Caco-2 (cell line): ENCODE measurements at regions of chr10 and their contacts with region 1.

Region 1: DNA sequence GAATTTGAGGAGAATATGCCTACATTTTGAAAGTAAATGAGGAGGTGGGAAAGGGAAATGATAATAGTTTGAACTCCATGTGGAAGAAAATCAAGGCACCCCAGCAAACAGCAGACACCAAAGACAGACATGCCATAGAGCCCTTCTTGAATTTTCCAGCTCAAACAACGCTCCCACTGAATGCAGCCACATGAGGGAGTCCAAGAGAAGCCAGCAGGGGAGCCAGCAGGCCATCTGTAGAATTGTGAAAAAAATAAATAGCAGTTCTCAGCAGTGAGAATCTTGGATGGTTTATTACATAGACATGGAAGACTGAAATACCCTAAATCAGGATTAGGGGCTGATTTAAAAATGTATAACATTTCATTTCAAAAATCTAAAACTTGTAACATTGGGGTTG is 1567.3 kb upstream of the LRRTM3 start:
- DNase-seq: peak; percentile 63 to 66
- H3K4me3 ChIP-seq: no peak overlapping the region
- H3K4me3 Mint-ChIP-seq: no peak overlapping the region
- H3K27ac Mint-ChIP-seq: no peak overlapping the region
- H3K4me1 ChIP-seq: no peaks in the 10 kb centered on the region
- H3K4me1 Mint-ChIP-seq: no peaks in the 10 kb centered on the region
- H3K27me3 ChIP-seq: no peaks in the 10 kb centered on the region
- H3K27me3 Mint-ChIP-seq: no peaks in the 10 kb centered on the region
- CTCF ChIP-seq: peak; percentile 84 to 93

Region 2: DNA sequence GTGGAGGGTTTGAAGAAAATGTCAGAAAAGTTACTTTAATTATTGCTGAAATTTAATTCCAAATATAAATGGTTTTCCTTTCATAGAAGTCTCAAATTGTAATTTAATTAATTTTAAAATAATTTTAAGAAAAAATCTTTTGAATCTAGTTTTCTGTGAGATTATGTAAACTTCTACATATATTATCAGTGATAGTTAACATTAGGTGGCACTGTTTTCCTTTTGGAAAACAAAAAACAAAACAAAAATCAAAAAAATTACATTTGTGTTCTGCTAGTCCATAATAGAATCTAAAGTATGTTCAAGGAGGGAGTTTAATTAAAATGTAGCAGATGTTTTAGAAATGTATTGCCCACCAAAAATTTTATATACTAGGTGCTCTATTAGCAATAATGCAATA is 380.6 kb before region 1 on chr10:
- CTCF ChIA-PET with region 1: no interaction called
- POLR2A ChIA-PET with region 1: no interaction called
- intact Hi-C with region 1: loop called (anchors 10 kb)
- DNase-seq: no peak
- H3K4me3 ChIP-seq: no peak overlapping the region
- H3K4me3 Mint-ChIP-seq: no peak overlapping the region
- H3K27ac Mint-ChIP-seq: no peak overlapping the region
- H3K4me1 ChIP-seq: no peaks in the 10 kb centered on the region
- H3K4me1 Mint-ChIP-seq: no peaks in the 10 kb centered on the region
- H3K27me3 ChIP-seq: no peaks in the 10 kb centered on the region
- H3K27me3 Mint-ChIP-seq: no peaks in the 10 kb centered on the region
- CTCF ChIP-seq: peak in 1 of 2 experiments; percentile 25

Region 3: GRCh38 chr10:65570143-65571010 is 211.8 kb after region 1 on chr10:
- CTCF ChIA-PET with region 1: no interaction called
- POLR2A ChIA-PET with region 1: no interaction called
- intact Hi-C with region 1: loop called (anchors 5 kb)
- DNase-seq: peak; percentile 87 to 90
- H3K4me3 ChIP-seq: peak overlapping the region; percentile 49
- H3K4me3 Mint-ChIP-seq: peak overlapping the region; percentile 95
- H3K27ac Mint-ChIP-seq: peak overlapping the region; percentile 95
- H3K4me1 ChIP-seq: peaks cover 8% of the 10 kb centered on the region; the same call in 1 of the 2 replicates
- H3K4me1 Mint-ChIP-seq: peaks cover 8% of the 10 kb centered on the region
- H3K27me3 ChIP-seq: no peaks in the 10 kb centered on the region
- H3K27me3 Mint-ChIP-seq: peaks cover 3% of the 10 kb centered on the region
- CTCF ChIP-seq: no peak

Region 4: GRCh38 chr10:65968866-65969265 is 610.3 kb after region 1 on chr10:
- CTCF ChIA-PET with region 1: no interaction called
- POLR2A ChIA-PET with region 1: no interaction called
- intact Hi-C with region 1: loop called (anchors 2 kb)
- DNase-seq: no peak
- H3K4me3 ChIP-seq: no peak overlapping the region
- H3K4me3 Mint-ChIP-seq: no peak overlapping the region
- H3K27ac Mint-ChIP-seq: no peak overlapping the region
- H3K4me1 ChIP-seq: no peaks in the 10 kb centered on the region
- H3K4me1 Mint-ChIP-seq: peaks cover 8% of the 10 kb centered on the region
- H3K27me3 ChIP-seq: no peaks in the 10 kb centered on the region
- H3K27me3 Mint-ChIP-seq: no peaks in the 10 kb centered on the region
- CTCF ChIP-seq: peak in 1 of 2 experiments; percentile 21

Region 5: GRCh38 chr10:66180581-66181318 is 822.2 kb after region 1 on chr10:
- CTCF ChIA-PET with region 1: no interaction called
- POLR2A ChIA-PET with region 1: no interaction called
- intact Hi-C with region 1: loop called (anchors 1 kb)
- DNase-seq: peak in 1 of 2 experiments; percentile 73
- H3K4me3 ChIP-seq: no peak overlapping the region
- H3K4me3 Mint-ChIP-seq: no peak overlapping the region
- H3K27ac Mint-ChIP-seq: no peak overlapping the region
- H3K4me1 ChIP-seq: no peaks in the 10 kb centered on the region
- H3K4me1 Mint-ChIP-seq: no peaks in the 10 kb centered on the region
- H3K27me3 ChIP-seq: no peaks in the 10 kb centered on the region
- H3K27me3 Mint-ChIP-seq: no peaks in the 10 kb centered on the region
- CTCF ChIP-seq: peak; percentile 73 to 89